ENCODE measurements at regions of chr12 and their contacts with region 1.

Region 1: GRCh38 chr12:98516184-98516873 is 939 bp downstream of the TMPO start:
- DNase-seq: peak; percentile 95
- H3K4me3 Mint-ChIP-seq: peak overlapping the region; percentile 92
- H3K27ac Mint-ChIP-seq: peak overlapping the region; percentile 97
- H3K4me1 Mint-ChIP-seq: peaks cover 30% of the 10 kb centered on the region
- H3K27me3 Mint-ChIP-seq: no peaks in the 10 kb centered on the region

Region 2: DNA sequence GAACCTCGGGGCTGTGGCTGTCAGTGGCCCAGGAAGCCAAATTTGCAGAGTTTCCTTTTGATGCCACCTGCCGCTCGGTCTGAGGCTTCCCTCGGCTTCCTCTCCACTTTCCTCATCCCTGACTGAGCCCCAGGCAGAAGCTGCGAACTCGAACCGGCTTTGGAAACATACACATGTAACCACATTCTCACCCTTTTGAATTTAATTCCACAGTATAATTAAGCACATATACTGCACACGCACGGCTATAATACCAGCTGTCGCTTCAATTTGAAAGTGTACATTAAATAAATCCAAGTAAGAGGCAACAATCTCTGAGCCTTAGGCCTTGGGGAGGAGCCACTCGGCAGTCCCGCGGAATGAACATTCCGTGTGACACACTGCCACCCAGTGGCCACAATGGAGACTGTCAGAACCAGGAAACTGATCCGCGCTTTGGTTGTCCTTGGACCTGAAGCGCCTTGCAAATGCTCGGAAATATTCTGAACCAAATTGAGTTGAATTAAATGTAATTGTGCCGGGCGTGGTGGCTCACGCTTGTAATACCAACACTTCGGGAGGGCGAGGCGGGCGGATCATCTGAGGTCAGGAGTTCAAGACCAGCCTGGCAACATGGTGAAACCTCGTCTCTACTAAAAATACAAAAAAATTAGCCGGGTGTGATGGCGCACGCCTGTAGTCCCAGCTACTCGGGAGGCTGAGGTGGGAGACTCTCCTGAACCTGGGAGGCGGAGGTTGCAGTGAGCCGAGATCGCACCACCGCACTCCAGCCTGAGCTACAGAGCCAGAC is 118.8 kb before region 1 on chr12:
- intact Hi-C with region 1: loop called (anchors 1 kb)
- DNase-seq: peak; percentile 95
- H3K4me3 Mint-ChIP-seq: peak overlapping the region; percentile 72
- H3K27ac Mint-ChIP-seq: peak overlapping the region; percentile 10
- H3K4me1 Mint-ChIP-seq: peaks cover 35% of the 10 kb centered on the region
- H3K27me3 Mint-ChIP-seq: peaks cover 6% of the 10 kb centered on the region

Region 3: GRCh38 chr12:98453070-98453469 is 63.3 kb before region 1 on chr12:
- intact Hi-C with region 1: loop called (anchors 2 kb)
- DNase-seq: no peak
- H3K4me3 Mint-ChIP-seq: no peak overlapping the region
- H3K27ac Mint-ChIP-seq: no peak overlapping the region
- H3K4me1 Mint-ChIP-seq: peaks cover 9% of the 10 kb centered on the region
- H3K27me3 Mint-ChIP-seq: peaks cover 22% of the 10 kb centered on the region

Region 4: GRCh38 chr12:98503592-98504367 is 12.5 kb before region 1 on chr12:
- intact Hi-C with region 1: loop called (anchors 1 kb)
- DNase-seq: peak; percentile 97
- H3K4me3 Mint-ChIP-seq: peak overlapping the region; percentile 92
- H3K27ac Mint-ChIP-seq: peak overlapping the region; percentile 99
- H3K4me1 Mint-ChIP-seq: peaks cover 26% of the 10 kb centered on the region
- H3K27me3 Mint-ChIP-seq: peaks cover 7% of the 10 kb centered on the region

Region 5: DNA sequence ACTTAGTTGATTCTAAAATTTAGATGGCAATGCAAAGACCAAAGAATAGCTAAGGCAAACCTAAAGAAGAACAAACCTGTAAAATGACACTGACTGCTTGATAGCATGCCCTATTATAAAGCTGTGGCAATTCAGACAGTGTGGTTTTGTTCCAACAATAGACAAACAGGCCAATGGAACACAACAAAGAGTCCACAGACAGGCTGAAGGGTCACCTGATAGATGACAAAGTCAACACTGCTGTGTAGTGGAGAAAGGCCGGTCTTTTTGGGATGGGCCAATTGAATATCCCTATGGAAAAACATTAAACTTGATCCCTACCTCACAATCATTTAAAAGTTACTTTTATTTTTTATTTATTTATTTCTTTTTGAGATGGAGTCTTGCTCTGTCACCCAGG is 43.3 kb after region 1 on chr12:
- intact Hi-C with region 1: no loop called
- DNase-seq: no peak
- H3K4me3 Mint-ChIP-seq: no peak overlapping the region
- H3K27ac Mint-ChIP-seq: no peak overlapping the region
- H3K4me1 Mint-ChIP-seq: no peaks in the 10 kb centered on the region
- H3K27me3 Mint-ChIP-seq: no peaks in the 10 kb centered on the region

Region 6: DNA sequence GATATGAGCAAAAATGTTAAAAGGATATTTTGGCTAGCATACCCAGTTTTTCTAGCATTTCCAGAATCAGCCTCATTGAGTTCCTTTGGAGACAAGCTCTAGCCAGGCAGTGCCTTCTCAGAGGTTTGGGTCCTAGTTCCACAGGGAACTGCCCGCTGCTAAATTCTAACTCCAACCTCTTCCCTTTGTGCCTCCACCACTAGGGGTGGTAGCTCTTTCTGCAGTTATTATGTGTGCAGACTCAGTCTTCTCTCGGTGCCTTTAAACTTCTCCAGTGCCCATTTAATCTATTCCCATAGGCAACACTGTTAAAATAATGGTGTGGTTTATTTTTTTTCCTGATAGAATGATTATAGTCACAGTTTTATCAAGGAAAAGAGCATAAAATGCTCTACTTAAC is 55.7 kb after region 1 on chr12:
- intact Hi-C with region 1: no loop called
- DNase-seq: no peak
- H3K4me3 Mint-ChIP-seq: no peak overlapping the region
- H3K27ac Mint-ChIP-seq: no peak overlapping the region
- H3K4me1 Mint-ChIP-seq: no peaks in the 10 kb centered on the region
- H3K27me3 Mint-ChIP-seq: peaks cover 2% of the 10 kb centered on the region

Region 7: GRCh38 chr12:98593351-98594049 is 77.2 kb after region 1 on chr12 and contains the start of gene SLC25A3:
- intact Hi-C with region 1: loop called (anchors 1 kb)
- DNase-seq: peak; percentile 98
- H3K4me3 Mint-ChIP-seq: peak within 1 kb of the TSS; percentile 98
- H3K27ac Mint-ChIP-seq: peak within 1 kb of the TSS; percentile 99
- H3K4me1 Mint-ChIP-seq: peaks cover 19% of the 10 kb centered on the region
- H3K27me3 Mint-ChIP-seq: peaks cover 1% of the 10 kb centered on the region
- total RNA-seq, gene SLC25A3: 598 and 612 TPM in 2 replicates

Region 8: GRCh38 chr12:98743347-98743953 is 227.1 kb after region 1 on chr12:
- intact Hi-C with region 1: loop called (anchors 5 kb)
- DNase-seq: peak; percentile 83
- H3K4me3 Mint-ChIP-seq: peak overlapping the region; percentile 68
- H3K27ac Mint-ChIP-seq: peak overlapping the region; percentile 97
- H3K4me1 Mint-ChIP-seq: peaks cover 52% of the 10 kb centered on the region
- H3K27me3 Mint-ChIP-seq: peaks cover 11% of the 10 kb centered on the region

Measured in activated CD4-positive, alpha-beta T cell treated with anti-CD3 and anti-CD28 coated beads, Interleukin-2, amount 10 ng/mL, durations not matched to agents 24 days and 14 days (primary cell).